Endothelial cell of umbilical vein (primary cell): ENCODE measurements at regions of chr14 and their contacts with region 1.

Region 1: GRCh38 chr14:55832974-55833373 is 253.0 kb downstream of the KTN1 start:
- DNase-seq: no peak
- H3K4me3 ChIP-seq: no peak overlapping the region
- H3K27ac ChIP-seq: no peak overlapping the region
- H3K4me1 ChIP-seq: peaks cover 2% of the 10 kb centered on the region
- H3K27me3 ChIP-seq: no peaks in the 10 kb centered on the region
- CTCF ChIP-seq: no peak
- POLR2A ChIP-seq: no peak

Region 2: GRCh38 chr14:55846826-55847446 is 14.0 kb after region 1 on chr14:
- CTCF ChIA-PET with region 1: no interaction called
- POLR2A ChIA-PET with region 1: no interaction called
- dilution Hi-C with region 1: no loop called
- intact Hi-C with region 1: loop called (anchors 1 kb)
- DNase-seq: no peak
- H3K4me3 ChIP-seq: no peak overlapping the region
- H3K27ac ChIP-seq: no peak overlapping the region
- H3K4me1 ChIP-seq: peaks cover 8% of the 10 kb centered on the region
- H3K27me3 ChIP-seq: no peaks in the 10 kb centered on the region
- CTCF ChIP-seq: no peak
- POLR2A ChIP-seq: no peak

Region 3: GRCh38 chr14:56379956-56380355 is 547.0 kb after region 1 on chr14:
- CTCF ChIA-PET with region 1: no interaction called
- POLR2A ChIA-PET with region 1: no interaction called
- dilution Hi-C with region 1: no loop called
- intact Hi-C with region 1: no loop called
- DNase-seq: no peak
- H3K4me3 ChIP-seq: no peak overlapping the region
- H3K27ac ChIP-seq: no peak overlapping the region
- H3K4me1 ChIP-seq: peaks cover 24% of the 10 kb centered on the region
- H3K27me3 ChIP-seq: no peaks in the 10 kb centered on the region
- CTCF ChIP-seq: no peak
- POLR2A ChIP-seq: no peak